Activated naive CD8-positive, alpha-beta T cell treated with anti-CD3 and anti-CD28 coated beads, Interleukin-2, amount 10 ng/mL, durations not matched to agents 7 days and 5 days (primary cell): ENCODE measurements at regions of chr11 and their contacts with region 1.

Region 1: GRCh38 chr11:96242971-96243647 is 99.9 kb downstream of the MAML2 start:
- DNase-seq: peak; percentile 71
- ATAC-seq: peak; percentile 88
- H3K4me3 Mint-ChIP-seq: peak overlapping the region; percentile 81
- H3K27ac Mint-ChIP-seq: peak overlapping the region; percentile 86
- H3K4me1 Mint-ChIP-seq: peaks cover 45% of the 10 kb centered on the region
- H3K27me3 Mint-ChIP-seq: no peaks in the 10 kb centered on the region

Region 2: DNA sequence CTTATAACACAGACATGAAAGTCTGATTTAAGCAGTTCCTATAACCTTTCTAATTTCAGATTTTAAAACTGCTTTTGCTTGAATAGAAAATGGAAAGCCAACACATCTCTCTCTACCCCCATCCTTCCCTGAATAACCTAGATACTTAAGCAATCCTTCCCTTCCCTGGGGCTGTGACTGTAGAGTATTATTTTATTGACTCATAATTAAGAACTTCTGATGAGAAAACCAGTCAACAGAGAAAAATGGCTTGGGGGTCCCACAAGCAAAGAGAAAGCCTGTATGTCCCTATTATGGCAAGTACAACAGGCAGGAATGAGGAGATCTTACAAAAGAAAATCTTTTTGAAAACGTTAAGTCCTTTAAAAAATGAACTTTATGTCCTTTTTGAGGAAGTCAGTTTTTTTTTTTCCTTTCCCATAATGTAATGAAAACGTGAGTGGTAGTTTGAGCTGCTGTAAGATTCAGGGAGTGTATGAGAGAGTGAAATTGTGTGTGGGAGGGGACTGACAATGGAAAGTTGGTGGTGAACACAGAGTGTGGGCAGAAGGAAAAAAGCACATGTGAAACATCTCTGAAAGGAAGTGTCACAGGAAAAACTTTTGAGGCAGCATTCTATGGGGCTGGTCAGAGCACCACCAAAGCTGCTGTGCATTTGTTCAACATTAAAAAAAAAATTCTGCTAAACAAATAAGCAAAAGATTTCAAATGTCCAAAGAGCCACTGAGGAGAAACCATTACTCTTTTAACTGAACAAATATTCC is 54.7 kb before region 1 on chr11:
- POLR2A ChIA-PET with region 1: no interaction called
- DNase-seq: no peak
- ATAC-seq: peak; percentile 64
- H3K4me3 Mint-ChIP-seq: peak overlapping the region; percentile 56
- H3K27ac Mint-ChIP-seq: peak overlapping the region; percentile 54
- H3K4me1 Mint-ChIP-seq: peaks cover 29% of the 10 kb centered on the region
- H3K27me3 Mint-ChIP-seq: no peaks in the 10 kb centered on the region

Region 3: GRCh38 chr11:96215110-96215782 is 27.9 kb before region 1 on chr11:
- POLR2A ChIA-PET with region 1: no interaction called
- DNase-seq: peak; percentile 55
- ATAC-seq: peak; percentile 67
- H3K4me3 Mint-ChIP-seq: peak overlapping the region; percentile 74
- H3K27ac Mint-ChIP-seq: peak overlapping the region; percentile 99
- H3K4me1 Mint-ChIP-seq: peaks cover 64% of the 10 kb centered on the region
- H3K27me3 Mint-ChIP-seq: no peaks in the 10 kb centered on the region

Region 4: DNA sequence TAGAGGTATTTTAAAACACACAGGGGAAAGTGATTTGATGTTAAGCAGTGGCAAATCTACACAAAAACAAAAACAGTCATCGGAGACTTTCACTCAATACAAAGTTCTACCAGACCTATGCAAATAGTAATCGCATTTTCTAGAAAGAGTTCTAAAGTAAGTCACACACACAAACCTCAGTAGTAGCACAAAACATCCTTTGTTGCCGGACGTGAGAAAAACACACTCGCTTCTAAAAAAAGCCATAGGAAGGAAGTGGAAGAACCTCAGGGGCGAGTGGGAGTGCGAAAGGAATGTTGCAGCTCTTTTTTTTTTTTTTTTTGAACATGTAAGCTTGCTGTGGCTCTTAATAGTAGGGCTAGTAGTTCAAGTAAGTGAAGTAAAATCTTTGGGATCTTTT is 11.0 kb after region 1 on chr11:
- POLR2A ChIA-PET with region 1: interaction called, 21 read pairs
- DNase-seq: no peak
- ATAC-seq: peak; percentile 24
- H3K4me3 Mint-ChIP-seq: peak overlapping the region; percentile 72
- H3K27ac Mint-ChIP-seq: peak overlapping the region; percentile 93
- H3K4me1 Mint-ChIP-seq: peaks cover 61% of the 10 kb centered on the region
- H3K27me3 Mint-ChIP-seq: no peaks in the 10 kb centered on the region

Region 5: GRCh38 chr11:96272529-96273222 is 29.6 kb after region 1 on chr11:
- POLR2A ChIA-PET with region 1: no interaction called
- DNase-seq: no peak
- ATAC-seq: no peak
- H3K4me3 Mint-ChIP-seq: no peak overlapping the region
- H3K27ac Mint-ChIP-seq: no peak overlapping the region
- H3K4me1 Mint-ChIP-seq: peaks cover 21% of the 10 kb centered on the region
- H3K27me3 Mint-ChIP-seq: no peaks in the 10 kb centered on the region

Region 6: GRCh38 chr11:96293598-96294021 is 50.5 kb after region 1 on chr11:
- POLR2A ChIA-PET with region 1: no interaction called
- DNase-seq: no peak
- ATAC-seq: peak; percentile 84
- H3K4me3 Mint-ChIP-seq: peak overlapping the region; percentile 45
- H3K27ac Mint-ChIP-seq: peak overlapping the region; percentile 46
- H3K4me1 Mint-ChIP-seq: peaks cover 53% of the 10 kb centered on the region
- H3K27me3 Mint-ChIP-seq: no peaks in the 10 kb centered on the region